ENCODE measurements at regions of chr19 and their contacts with region 1.

Region 1: GRCh38 chr19:58513694-58514563 is 2.1 kb upstream of the SLC27A5 start:
- DNase-seq: peak; percentile 96
- H3K4me3 Mint-ChIP-seq: peak overlapping the region; percentile 91
- H3K27ac Mint-ChIP-seq: peak overlapping the region; percentile 96
- H3K4me1 Mint-ChIP-seq: peaks cover 20% of the 10 kb centered on the region
- H3K27me3 Mint-ChIP-seq: peaks cover 3% of the 10 kb centered on the region

Region 2: GRCh38 chr19:58091251-58091995 is 422.5 kb before region 1 on chr19:
- intact Hi-C with region 1: no loop called
- DNase-seq: no peak
- H3K4me3 Mint-ChIP-seq: no peak overlapping the region
- H3K27ac Mint-ChIP-seq: no peak overlapping the region
- H3K4me1 Mint-ChIP-seq: no peaks in the 10 kb centered on the region
- H3K27me3 Mint-ChIP-seq: no peaks in the 10 kb centered on the region

Region 3: GRCh38 chr19:58499021-58499927 is 14.7 kb before region 1 on chr19:
- intact Hi-C with region 1: loop called (anchors 1 kb)
- DNase-seq: peak; percentile 96
- H3K4me3 Mint-ChIP-seq: peak overlapping the region; percentile 91
- H3K27ac Mint-ChIP-seq: peak overlapping the region; percentile 91
- H3K4me1 Mint-ChIP-seq: peaks cover 21% of the 10 kb centered on the region
- H3K27me3 Mint-ChIP-seq: peaks cover 7% of the 10 kb centered on the region

Region 4: DNA sequence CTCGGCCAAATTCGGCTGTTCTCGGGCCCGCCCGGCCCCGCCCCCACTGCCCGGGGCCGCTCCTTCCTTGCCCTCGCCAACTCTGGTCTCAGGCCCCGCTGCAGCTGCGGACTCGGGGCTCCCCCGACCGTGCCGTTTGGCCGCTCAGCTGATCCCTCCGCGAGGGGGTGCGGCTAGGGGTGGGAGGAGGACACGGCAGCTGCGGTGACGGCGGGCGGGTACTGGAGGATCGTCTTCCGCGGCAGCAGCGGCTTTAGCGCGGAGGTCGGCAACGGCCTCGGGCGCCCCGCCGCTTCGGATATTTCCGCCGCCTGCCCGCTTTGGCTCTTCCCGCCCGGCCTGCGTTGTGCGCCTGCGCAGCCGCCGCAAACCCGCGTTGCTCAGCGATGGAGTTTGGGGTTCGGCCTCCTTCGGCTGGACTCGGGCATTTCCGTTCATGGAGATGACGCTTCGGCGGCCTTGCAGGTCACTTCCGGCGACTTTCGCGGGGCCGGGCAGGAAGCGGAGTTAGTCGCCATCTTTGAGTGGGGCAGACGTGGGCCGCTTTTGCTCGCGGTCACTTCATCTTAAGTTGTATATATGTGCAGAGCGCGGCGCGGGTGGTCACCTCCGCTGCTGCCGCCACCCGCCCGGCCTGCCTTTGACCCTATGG is 44.8 kb after region 1 on chr19:
- intact Hi-C with region 1: loop called (anchors 1 kb)
- DNase-seq: peak; percentile 100
- H3K4me3 Mint-ChIP-seq: peak overlapping the region; percentile 95
- H3K27ac Mint-ChIP-seq: peak overlapping the region; percentile 99
- H3K4me1 Mint-ChIP-seq: peaks cover 66% of the 10 kb centered on the region
- H3K27me3 Mint-ChIP-seq: peaks cover 1% of the 10 kb centered on the region

Region 5: GRCh38 chr19:58581227-58582151 is 67.6 kb after region 1 on chr19:
- intact Hi-C with region 1: loop called (anchors 1 kb)
- DNase-seq: peak; percentile 86
- H3K4me3 Mint-ChIP-seq: no peak overlapping the region
- H3K27ac Mint-ChIP-seq: peak overlapping the region; percentile 67
- H3K4me1 Mint-ChIP-seq: peaks cover 33% of the 10 kb centered on the region
- H3K27me3 Mint-ChIP-seq: no peaks in the 10 kb centered on the region